Heart right ventricle (tissue), 16 donors: ENCODE measurements at regions of chr13 and their contacts with region 1.

Region 1: GRCh38 chr13:40682449-40683240 is 16.2 kb upstream of the FOXO1 start:
- DNase-seq: no peak
- ATAC-seq: peak in 2 of 8 donors; percentile 12 to 30
- H3K4me3 ChIP-seq: no peak overlapping the region
- H3K27ac ChIP-seq: no peak overlapping the region
- H3K4me1 ChIP-seq: peaks cover 0 to 27% (median 13%) of the 10 kb centered on the region in 9 donors
- H3K27me3 ChIP-seq: no peaks in the 10 kb centered on the region
- CTCF ChIP-seq: peak; percentile 57 to 83 (median 70)

Region 2: DNA sequence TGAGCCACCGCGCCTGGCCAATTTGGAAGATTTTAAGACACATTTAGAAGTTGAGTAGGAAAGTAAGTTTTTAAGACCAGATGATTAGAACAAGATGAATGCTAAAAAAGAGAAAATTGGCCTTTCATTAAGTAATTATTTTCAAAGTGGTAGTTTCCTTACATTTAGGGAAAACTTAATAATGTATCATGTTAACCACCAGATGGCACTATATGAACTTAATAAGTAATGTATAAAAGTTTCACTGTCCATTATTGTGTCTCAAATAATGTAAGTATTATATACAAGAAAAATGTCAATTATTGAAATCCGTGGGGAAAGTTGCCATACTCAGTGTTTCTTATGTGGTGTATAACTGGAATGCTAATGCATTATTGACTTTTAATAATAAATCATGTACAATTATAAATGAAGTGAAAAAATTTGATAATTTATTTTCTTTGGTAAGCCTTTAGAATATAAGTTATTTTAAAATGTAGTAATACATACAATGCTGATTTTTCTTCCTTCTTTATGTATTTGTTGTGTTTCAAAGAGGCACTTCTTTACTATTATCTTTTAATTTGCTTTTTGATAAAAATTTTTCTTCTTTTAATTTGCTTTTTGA is 998.0 kb before region 1 on chr13:
- intact Hi-C with region 1: loop called (anchors 2 to 10 kb)
- DNase-seq: no peak
- ATAC-seq: no peak
- H3K4me3 ChIP-seq: no peak overlapping the region
- H3K27ac ChIP-seq: no peak overlapping the region
- H3K4me1 ChIP-seq: peaks cover 0 to 9% (median 0%) of the 10 kb centered on the region in 9 donors
- H3K27me3 ChIP-seq: no peaks in the 10 kb centered on the region
- CTCF ChIP-seq: peak in 8 of 9 donors; percentile 28 to 65 (median 50)

Region 3: GRCh38 chr13:39787086-39787487 is 895.6 kb before region 1 on chr13:
- intact Hi-C with region 1: loop called in 2 of 10 experiments (anchors 5 kb)
- DNase-seq: peak in 1 of 2 donors; percentile 21
- ATAC-seq: peak in 6 of 8 donors; percentile 38 to 76 (median 58)
- H3K4me3 ChIP-seq: no peak overlapping the region
- H3K27ac ChIP-seq: peak overlapping the region in 3 of 10 donors; percentile 6 to 42 (median 11)
- H3K4me1 ChIP-seq: peaks cover 0 to 32% (median 5%) of the 10 kb centered on the region in 9 donors
- H3K27me3 ChIP-seq: no peaks in the 10 kb centered on the region
- CTCF ChIP-seq: no peak

Region 4: DNA sequence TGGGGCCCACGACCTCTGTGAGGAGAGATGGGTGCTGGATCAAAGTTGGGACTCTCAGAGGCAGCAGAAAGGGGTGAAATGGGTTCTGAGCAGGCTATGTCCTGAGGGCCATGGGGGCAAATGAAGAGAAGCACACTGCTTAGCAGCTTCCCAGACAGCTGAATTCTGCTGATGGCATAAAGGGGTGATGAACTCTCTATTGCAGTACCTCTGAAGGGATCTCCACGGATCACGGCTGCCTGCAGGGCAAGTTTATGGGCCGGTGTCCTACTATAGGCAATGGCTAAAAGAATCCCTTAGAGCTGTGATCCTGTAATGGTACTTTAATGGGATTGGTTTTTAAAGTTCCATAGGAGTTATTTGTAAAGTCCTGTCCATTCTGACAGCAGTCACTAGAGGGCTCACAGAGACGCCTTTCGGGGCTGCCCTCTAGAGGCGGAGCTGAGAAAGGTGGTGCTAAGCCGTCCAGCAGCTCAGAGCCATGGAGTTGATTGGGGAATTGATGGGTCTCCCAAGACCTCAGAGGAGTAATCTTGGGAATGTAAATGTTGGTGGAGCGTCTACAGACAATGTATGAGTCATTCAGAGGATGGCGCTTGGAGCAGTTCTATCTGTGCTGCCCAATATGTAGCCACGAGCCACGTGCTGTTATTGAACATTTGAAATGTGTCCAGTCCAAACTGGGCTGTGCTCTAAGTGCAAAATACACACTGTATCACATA is 739.9 kb before region 1 on chr13:
- intact Hi-C with region 1: loop called in 9 of 10 experiments (anchors 5 to 10 kb)
- DNase-seq: peak; percentile 61 to 62
- ATAC-seq: peak; percentile 86 to 93 (median 90)
- H3K4me3 ChIP-seq: no peak overlapping the region
- H3K27ac ChIP-seq: peak overlapping the region in 2 of 10 donors; percentile 8 to 12
- H3K4me1 ChIP-seq: peaks cover 0 to 13% (median 0%) of the 10 kb centered on the region in 9 donors
- H3K27me3 ChIP-seq: no peaks in the 10 kb centered on the region
- CTCF ChIP-seq: peak; percentile 78 to 98 (median 88)

Region 5: DNA sequence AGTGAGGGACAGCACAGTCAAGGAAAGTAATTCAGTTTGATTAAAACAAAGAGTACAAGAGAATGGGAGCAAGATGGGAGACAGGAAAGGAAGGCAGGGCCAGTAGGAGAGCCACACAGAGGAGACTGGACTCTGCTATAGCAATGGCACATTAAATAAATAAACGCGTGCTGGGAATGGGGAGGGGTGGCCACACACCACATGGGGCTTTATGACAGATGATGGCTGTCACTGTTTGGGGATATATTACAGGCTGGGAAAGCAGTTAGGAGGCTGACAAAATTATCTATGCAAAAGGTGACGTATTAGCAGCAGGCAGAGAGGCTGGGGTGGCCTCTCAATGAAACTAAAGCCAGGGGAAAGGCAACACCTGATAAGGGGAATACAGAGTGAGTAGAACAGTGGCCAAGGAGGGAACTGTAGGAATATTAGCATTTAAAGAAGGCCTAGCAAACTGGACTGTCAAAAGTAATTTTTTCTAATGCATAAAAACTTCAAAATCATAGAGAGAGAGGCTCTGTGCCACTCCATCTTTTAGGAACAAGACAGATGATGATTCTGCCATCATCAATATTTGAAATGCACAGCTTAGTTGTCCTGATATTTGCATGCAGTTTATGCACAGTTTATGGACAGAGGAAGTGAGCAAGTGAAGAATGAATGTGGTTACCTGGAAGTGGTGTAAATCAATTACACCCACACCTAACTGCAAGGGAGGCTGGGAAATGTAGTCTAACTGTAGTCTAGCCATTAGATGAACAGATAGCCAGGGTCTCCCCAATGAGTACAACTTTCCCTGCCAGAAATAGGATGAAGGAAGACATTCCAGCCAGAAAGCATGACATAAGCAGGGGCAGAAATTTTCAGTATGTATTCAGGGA is 362.7 kb before region 1 on chr13:
- intact Hi-C with region 1: no loop called
- DNase-seq: no peak
- ATAC-seq: no peak
- H3K4me3 ChIP-seq: no peak overlapping the region
- H3K27ac ChIP-seq: no peak overlapping the region
- H3K4me1 ChIP-seq: peaks cover 0 to 19% (median 16%) of the 10 kb centered on the region in 9 donors
- H3K27me3 ChIP-seq: peaks cover 0 to 2% (median 0%) of the 10 kb centered on the region in 7 donors
- CTCF ChIP-seq: no peak

Region 6: GRCh38 chr13:40519637-40520036 is 163.0 kb before region 1 on chr13:
- intact Hi-C with region 1: no loop called
- DNase-seq: peak in 1 of 2 donors; percentile 27
- ATAC-seq: peak in 6 of 8 donors; percentile 54 to 71 (median 62)
- H3K4me3 ChIP-seq: no peak overlapping the region
- H3K27ac ChIP-seq: no peak overlapping the region
- H3K4me1 ChIP-seq: peaks cover 0 to 9% (median 5%) of the 10 kb centered on the region in 9 donors
- H3K27me3 ChIP-seq: no peaks in the 10 kb centered on the region
- CTCF ChIP-seq: no peak